Ascending aorta (tissue), 2 donors: ENCODE measurements at regions of chr14 and their contacts with region 1.

Region 1: GRCh38 chr14:61280526-61281185 is 482 bp downstream of the TMEM30B start:
- DNase-seq: peak in 1 of 2 donors; percentile 81
- H3K4me3 ChIP-seq: peak overlapping the region; percentile 66 to 70
- H3K27ac ChIP-seq: peak overlapping the region; percentile 94 to 96
- H3K4me1 ChIP-seq: peaks cover 0 to 9% of the 10 kb centered on the region in 2 donors
- H3K27me3 ChIP-seq: no peaks in the 10 kb centered on the region
- CTCF ChIP-seq: peak; percentile 32 to 61 (median 35)

Region 2: GRCh38 chr14:60980811-60981632 is 299.6 kb before region 1 on chr14 and contains the starts of genes SLC38A6 and TRMT5:
- intact Hi-C with region 1: loop called (anchors 5 kb)
- DNase-seq: peak; percentile 75 to 98
- H3K4me3 ChIP-seq: peak within 1 kb of the TSS; percentile 67 to 84
- H3K27ac ChIP-seq: peak within 1 kb of the TSS; percentile 85 to 87
- H3K4me1 ChIP-seq: peaks cover 0 to 11% of the 10 kb centered on the region in 2 donors
- H3K27me3 ChIP-seq: no peaks in the 10 kb centered on the region
- CTCF ChIP-seq: no peak
- total RNA-seq, gene SLC38A6: 1.8 TPM
- total RNA-seq, gene TRMT5: 3.5 TPM

Region 3: DNA sequence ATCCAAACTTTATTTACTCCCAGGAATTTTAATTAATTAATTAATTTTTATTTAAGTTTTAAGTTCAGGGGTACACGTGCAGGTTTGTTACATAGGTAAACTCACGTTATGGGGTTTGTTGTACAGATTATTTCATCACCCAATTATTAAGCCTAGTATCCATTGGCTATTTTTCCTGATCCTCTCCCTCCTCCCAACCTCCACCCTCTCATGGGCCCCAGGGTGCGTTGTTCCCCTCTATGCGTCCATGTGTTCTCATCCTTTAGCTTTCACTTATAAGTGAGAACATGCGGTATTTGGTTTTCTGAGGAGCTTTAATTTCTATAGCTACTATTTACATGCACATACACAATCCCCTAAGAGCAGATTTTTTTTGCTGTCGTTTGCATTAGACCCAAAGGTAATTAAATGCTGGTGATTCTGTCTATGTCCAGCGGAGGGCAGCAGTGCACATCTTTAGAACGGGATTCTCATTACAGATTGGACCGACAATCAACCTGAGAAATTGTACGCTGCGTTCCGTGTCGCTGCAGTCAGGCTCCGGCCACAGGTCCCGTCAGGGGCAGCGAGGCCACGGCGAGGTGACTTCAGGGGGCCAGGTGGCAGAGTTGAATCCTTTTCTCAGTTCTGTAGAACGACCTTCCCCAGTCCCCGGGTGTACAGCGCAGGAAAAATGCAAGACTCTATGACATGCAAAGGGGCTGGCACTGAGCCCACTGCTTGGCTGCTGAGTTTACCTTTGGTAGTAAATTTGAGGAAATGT is 11.2 kb before region 1 on chr14:
- intact Hi-C with region 1: loop called (anchors 1 kb)
- DNase-seq: peak in 1 of 2 donors; percentile 92
- H3K4me3 ChIP-seq: peak overlapping the region; percentile 35 to 57
- H3K27ac ChIP-seq: no peak overlapping the region
- H3K4me1 ChIP-seq: no peaks in the 10 kb centered on the region
- H3K27me3 ChIP-seq: no peaks in the 10 kb centered on the region
- CTCF ChIP-seq: peak; percentile 69 to 79 (median 70)

Region 4: DNA sequence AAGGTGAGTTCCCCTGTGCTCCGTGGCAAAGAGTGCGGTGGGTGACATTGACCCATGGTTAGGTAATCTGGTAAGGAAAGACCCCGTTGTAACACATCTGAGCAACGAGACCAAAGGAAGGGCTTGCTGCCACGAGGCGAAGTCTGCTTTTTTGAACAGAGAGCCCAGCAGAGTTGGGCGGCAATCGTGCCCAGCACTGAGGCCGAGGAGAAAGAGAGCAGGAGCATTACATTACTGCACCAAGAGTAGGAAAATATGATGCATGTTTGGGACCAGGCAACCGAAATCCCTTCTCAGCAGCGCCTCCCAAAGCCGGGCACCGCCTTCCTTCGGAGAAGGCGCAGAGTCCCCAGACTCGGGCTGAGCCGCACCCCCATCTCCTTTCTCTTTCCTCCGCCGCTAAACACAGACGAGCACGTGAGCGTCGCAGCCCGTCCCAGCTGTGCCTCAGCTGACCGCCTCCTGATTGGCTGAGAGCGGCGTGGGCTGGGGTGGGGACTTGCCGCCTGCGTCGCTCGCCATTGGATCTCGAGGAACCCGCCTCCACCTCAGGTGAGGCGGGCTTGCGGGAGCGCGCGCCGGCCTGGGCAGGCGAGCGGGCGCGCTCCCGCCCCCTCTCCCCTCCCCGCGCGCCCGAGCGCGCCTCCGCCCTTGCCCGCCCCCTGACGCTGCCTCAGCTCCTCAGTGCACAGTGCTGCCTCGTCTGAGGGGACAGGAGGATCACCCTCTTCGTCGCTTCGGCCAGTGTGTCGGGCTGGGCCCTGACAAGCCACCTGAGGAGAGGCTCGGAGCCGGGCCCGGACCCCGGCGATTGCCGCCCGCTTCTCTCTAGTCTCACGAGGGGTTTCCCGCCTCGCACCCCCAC is 414.4 kb after region 1 on chr14 and contains the start of gene HIF1A:
- intact Hi-C with region 1: loop called (anchors 5 kb)
- DNase-seq: peak; percentile 91 to 98
- H3K4me3 ChIP-seq: peak within 1 kb of the TSS; percentile 95
- H3K27ac ChIP-seq: peak within 1 kb of the TSS; percentile 96 to 98
- H3K4me1 ChIP-seq: peaks cover 3 to 6% of the 10 kb centered on the region in 2 donors
- H3K27me3 ChIP-seq: no peaks in the 10 kb centered on the region
- CTCF ChIP-seq: no peak
- total RNA-seq, gene HIF1A: 87.0 TPM